Activated CD4-positive, alpha-beta T cell treated with anti-CD3 and anti-CD28 coated beads, Interleukin-2, amount 10 ng/mL, durations not matched to agents 24 days and 14 days (primary cell): ENCODE measurements at regions of chr3 and their contacts with region 1.

Region 1: DNA sequence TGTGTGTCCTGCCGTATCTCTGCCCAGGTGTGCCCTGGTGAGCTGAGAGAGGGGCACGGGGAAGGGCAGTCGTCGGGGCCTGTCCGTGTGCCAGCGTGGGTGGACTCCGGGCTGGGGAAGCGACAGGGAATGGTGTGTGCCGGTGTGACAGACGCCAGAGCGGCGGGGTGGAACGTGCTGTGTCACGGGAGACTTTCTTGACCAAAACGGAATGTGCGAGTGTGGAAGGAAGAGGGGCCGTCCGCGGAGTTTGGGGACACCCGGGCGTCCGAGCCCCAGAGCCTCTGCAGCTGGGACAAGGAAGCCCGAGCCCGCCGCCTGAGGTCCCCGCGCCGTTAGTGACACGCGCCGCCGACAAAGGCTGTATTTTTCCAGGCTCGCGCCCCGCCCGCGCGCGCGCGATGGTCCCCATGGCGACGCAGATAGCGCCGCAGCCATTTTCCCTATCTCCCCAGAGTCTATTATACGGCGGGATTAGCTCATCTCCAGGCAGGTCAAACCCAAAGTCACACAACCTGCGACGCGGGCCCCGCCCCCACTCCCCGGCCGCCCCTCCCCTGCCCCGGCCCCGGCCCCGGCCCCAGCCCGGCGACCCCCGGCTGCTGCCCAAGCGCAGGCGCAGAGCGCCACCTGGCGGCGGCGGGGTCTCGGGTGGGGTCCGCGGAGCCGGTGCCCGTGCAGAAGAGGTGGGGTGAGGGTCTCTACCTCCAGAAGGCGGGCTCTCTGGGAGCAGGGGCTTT is 4.6 kb upstream of the GATA2 start:
- DNase-seq: peak; percentile 91
- H3K4me3 Mint-ChIP-seq: peak overlapping the region; percentile 76
- H3K27ac Mint-ChIP-seq: peak overlapping the region; percentile 7
- H3K4me1 Mint-ChIP-seq: peaks cover 2% of the 10 kb centered on the region
- H3K27me3 Mint-ChIP-seq: peaks cover 63% of the 10 kb centered on the region

Region 2: DNA sequence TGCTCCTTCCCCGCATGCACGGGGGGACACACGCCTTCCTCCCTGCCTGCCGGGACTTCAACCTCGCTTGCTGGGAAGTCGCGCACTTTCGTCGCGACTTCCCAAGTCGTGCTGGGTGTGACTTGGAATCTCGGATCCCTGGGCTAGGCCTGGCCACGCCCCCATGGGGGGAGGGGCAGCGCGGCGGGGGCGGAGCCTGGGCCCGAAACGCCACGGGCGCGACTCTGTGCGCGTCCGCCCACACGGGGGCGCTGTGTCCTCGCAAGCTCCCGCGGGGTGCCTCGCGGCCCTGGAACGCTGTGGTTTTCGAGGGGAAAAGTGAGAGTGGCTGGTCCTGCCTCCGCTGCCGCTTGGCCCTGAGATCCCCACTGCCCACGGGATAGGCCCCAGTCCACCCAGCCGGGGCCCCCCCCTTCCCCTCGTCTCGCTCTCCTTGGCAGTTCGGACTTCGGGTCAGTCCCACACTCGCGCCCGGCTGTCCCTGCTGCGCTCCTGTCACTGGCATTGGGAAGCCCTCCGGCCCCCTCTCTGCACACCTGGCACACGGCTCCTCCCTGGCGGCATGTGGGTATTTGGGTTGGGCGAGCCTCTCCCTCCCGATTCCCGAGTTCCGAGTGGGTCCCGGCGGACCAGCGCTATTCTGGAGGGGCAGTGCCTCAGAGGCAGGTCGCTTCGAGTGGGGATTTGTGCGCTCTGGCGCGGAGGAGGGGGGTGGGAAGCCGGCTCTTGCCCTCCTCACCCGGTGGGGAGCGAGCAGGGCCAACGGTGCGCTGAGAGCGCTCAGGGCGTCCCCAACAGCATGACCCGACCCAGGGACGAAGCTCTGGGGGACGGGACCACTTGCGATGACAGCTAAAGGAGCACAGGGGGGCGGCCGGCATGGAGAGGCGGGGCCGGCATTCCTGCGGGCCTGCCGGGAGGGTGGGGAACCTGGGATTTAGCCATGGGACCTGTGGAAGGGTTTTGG is 421.8 kb before region 1 on chr3:
- intact Hi-C with region 1: loop called (anchors 5 kb)
- DNase-seq: peak; percentile 96
- H3K4me3 Mint-ChIP-seq: peak overlapping the region; percentile 66
- H3K27ac Mint-ChIP-seq: no peak overlapping the region
- H3K4me1 Mint-ChIP-seq: peaks cover 8% of the 10 kb centered on the region
- H3K27me3 Mint-ChIP-seq: no peaks in the 10 kb centered on the region

Region 3: DNA sequence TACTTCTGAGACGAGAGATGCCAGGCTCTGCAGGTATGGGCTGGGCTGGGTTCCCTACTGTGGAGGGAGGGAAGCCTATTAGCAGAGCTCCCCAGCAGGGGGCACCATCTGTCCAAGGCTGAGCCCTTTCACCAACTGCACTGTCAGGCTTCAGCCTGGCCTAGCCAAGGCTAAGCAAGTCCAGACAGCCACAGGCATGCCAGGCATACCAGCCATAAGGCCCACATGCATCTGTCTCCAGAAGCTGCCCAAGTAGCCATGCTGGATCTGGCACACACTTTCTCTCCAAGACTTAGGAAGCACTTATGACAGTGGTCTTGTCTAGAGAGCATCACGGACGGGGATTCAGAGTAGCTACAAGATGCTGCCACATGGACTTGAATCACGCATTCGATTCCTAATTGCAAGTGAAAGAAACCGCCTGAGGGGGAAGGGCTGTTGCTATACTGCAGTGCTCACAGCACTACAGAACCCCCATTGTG is 402.3 kb before region 1 on chr3:
- intact Hi-C with region 1: loop called (anchors 5 kb)
- DNase-seq: peak; percentile 93
- H3K4me3 Mint-ChIP-seq: peak overlapping the region; percentile 36
- H3K27ac Mint-ChIP-seq: no peak overlapping the region
- H3K4me1 Mint-ChIP-seq: peaks cover 15% of the 10 kb centered on the region
- H3K27me3 Mint-ChIP-seq: no peaks in the 10 kb centered on the region

Region 4: DNA sequence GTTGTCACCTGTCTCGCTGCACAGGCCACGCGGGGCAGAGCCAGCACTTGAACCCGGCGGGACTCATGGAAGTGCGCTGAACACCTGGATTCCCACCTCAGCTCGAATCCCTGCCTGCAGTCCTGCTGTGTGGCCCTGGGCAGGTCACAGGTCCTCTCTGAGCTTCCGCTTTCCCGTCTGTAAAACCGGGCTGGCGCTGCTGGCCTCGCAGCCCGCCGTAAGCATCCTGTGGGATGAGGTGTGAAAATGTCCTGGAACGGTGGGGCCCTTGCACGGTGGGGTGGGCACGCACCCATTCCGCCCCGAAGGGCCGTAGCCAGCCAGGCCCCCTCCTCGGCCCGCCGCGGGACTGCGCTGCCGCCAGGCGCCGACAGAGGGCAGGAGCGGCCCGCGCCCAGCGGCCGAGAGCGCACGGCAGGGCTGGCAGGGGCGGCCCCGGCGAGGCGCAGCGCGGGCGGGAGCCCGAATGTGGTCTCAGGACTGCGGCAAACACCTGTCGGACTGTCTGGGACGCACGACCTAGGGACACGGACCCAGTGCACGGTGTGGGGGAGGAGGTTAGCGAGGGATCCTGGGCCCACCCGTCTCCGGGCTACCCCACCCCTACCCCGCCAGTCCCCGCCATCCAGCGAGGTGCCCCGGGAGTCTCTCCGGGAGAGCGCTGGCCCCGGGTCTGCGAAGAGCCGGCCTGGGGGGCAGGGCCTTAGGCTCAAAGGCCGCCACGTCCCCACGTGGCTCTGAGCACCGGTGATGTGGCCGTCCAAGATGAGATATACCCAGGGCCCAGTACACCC is 71.2 kb before region 1 on chr3:
- intact Hi-C with region 1: loop called (anchors 1 kb)
- DNase-seq: peak; percentile 91
- H3K4me3 Mint-ChIP-seq: no peak overlapping the region
- H3K27ac Mint-ChIP-seq: no peak overlapping the region
- H3K4me1 Mint-ChIP-seq: no peaks in the 10 kb centered on the region
- H3K27me3 Mint-ChIP-seq: peaks cover 15% of the 10 kb centered on the region

Region 5: DNA sequence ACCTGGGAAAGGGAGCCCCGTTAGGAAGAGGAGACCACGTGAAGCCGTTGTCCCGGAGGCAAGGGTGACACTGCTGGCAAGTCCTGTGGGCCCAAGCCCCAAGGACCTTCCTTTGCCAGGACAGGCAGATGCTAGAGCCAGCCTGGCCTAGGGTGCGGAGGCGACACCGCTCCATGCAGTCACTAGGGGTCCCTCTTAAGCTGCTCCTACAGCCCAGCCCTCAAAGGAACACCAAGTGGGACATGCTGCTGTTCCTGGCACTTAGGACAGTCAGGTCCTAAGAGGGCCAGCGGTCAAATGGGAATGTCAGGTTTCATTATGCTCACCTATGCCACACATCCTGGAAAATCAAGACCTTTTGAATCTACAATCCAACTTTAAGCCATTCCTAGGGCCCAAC is 93.4 kb after region 1 on chr3:
- intact Hi-C with region 1: no loop called
- DNase-seq: no peak
- H3K4me3 Mint-ChIP-seq: no peak overlapping the region
- H3K27ac Mint-ChIP-seq: no peak overlapping the region
- H3K4me1 Mint-ChIP-seq: peaks cover 13% of the 10 kb centered on the region
- H3K27me3 Mint-ChIP-seq: no peaks in the 10 kb centered on the region

Region 6: DNA sequence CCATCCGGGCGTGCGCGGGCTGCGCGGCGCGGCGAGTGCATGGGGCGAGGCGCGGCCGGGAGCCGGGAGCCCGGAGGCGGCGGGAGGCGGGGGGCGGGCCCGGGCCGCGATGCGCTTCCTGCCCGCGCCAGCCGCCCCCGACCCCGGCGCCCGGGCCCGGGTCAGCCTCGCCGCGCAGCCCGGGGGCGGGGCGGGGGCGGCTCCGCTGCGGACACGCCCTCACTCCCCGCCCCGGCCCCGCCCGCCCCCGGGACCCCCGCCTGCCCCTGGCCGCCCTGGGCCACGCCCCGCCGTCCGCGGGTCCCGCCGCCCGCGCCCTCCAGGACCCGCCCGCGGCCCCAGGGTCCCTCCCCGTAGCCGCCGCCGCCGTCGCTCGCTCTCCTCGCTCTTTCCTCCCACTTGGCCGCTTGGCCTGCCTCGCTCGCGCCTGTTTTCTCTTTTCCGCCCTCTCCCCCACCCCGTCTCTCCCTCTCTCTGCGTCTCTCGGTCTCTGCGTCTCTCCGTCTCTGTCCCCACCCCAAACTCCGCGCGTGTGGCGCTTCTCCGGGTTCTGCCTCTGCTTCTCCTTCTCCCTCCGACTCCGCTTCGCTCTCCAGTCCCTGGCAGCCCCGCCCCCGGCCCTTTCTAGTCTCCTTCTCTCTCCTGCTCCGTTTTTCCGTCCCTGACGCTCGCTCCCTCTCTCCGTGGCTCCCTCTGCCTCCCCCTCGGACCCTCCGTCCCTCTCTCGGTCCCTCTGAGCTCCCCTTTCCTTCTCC is 1109.3 kb after region 1 on chr3 and contains the start of gene PLXND1:
- intact Hi-C with region 1: loop called (anchors 10 kb)
- DNase-seq: peak; percentile 80
- H3K4me3 Mint-ChIP-seq: peak within 1 kb of the TSS; percentile 92
- H3K27ac Mint-ChIP-seq: peak within 1 kb of the TSS; percentile 92
- H3K4me1 Mint-ChIP-seq: peaks cover 13% of the 10 kb centered on the region
- H3K27me3 Mint-ChIP-seq: peaks cover 55% of the 10 kb centered on the region
- total RNA-seq, gene PLXND1: 1.6 and 1.7 TPM in 2 replicates